ENCODE measurements at regions of chr17 and their contacts with region 1.

Region 1: GRCh38 chr17:4997302-4998026 is at the starts of genes INCA1 and KIF1C:
- DNase-seq: peak; percentile 90 to 96
- H3K4me3 ChIP-seq: peak within 1 kb of the TSS; percentile 85 to 100
- H3K27ac ChIP-seq: peak within 1 kb of the TSS; percentile 94 to 97
- H3K4me1 ChIP-seq: peaks cover 0 to 37% (median 31%) of the 10 kb centered on the region in 4 donors
- H3K27me3 ChIP-seq: no peaks in the 10 kb centered on the region
- CTCF ChIP-seq: peak; percentile 24 to 43

Region 2: DNA sequence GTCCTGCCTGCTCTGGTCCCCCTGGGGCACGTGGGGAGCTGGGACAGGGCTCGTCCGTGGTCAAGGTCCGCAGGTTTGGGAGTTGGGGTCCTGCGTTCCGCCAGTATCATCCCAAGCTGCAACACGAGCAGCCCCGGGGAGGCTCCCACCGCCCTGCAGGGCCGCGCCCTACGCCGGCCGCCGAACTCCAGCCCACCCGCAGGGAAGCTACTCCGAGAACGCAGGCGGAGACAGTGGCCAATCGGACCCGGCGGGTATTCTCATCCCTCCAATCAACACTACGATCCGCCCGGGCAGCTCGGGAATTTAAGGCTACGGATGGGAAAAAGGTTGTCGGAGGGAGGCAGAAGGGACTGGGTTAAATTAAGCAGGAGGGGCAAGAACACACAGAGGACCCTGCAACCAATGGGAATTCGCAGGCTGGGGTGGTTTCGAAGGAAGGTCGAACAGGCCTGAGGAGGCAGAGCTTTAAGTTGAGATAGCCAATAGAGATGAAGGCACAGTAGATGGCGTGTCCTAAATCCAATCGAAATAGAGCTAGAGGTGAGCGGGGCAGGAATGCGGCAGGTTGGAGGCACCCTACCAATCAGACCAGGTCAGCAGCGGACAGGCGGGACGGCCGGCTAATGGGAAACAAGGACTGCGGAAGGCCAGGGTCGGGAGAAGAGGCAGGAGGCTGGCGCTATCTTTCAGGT is 30.5 kb before region 1 on chr17:
- intact Hi-C with region 1: loop called (anchors 1 kb)
- DNase-seq: peak; percentile 99
- H3K4me3 ChIP-seq: peak overlapping the region; percentile 66 to 75
- H3K27ac ChIP-seq: peak overlapping the region; percentile 90 to 92
- H3K4me1 ChIP-seq: peaks cover 0 to 34% (median 32%) of the 10 kb centered on the region in 4 donors
- H3K27me3 ChIP-seq: no peaks in the 10 kb centered on the region
- CTCF ChIP-seq: no peak

Region 3: DNA sequence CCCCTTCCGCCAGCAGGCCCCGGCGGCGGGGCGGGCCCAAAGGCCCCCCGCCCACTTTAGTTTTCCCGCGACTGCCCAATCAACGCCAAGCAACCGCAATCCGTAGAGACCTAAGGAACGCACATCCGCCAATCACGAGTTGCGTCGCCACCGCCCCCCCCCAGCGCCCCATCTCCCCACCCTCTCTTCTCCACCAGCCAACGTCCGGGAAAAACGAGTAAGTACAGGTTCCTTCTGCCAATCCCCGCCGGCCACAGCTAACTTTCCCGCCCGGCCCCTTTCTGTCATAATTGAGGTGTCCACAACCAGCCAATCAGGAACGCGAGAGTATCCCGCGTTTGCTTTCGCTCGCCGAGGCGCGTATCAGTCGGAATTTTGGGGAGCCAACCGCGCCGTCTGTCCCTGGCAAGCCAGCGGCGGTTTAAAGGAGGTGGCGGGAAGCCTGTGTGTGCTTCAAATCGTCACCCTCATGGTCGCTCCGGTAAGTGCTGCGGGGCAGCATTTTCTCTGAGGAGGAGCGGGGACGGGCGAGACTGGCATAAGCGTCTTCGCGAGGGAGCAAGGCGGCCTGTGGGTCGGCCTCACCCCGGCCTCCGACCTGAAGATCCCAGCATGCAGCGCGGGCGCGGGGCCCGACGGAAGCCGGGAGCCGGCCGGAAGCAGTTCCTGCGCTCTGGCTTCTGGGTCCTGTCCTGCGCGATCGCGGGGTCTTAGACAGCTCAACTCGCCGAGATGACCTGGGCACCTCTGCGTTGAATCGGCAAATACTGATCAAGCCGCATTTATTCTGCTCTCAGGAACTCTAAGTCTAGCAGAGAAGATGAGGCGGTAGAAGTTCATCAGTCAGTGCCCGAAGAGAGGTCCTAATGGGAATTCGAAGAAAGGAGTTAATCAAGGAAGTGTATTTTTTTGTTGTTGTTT is 489.0 kb after region 1 on chr17 and contains the start of gene MIS12:
- intact Hi-C with region 1: no loop called
- DNase-seq: peak; percentile 99
- H3K4me3 ChIP-seq: peak within 1 kb of the TSS; percentile 78 to 95
- H3K27ac ChIP-seq: peak within 1 kb of the TSS; percentile 95 to 98
- H3K4me1 ChIP-seq: peaks cover 0 to 31% (median 28%) of the 10 kb centered on the region in 4 donors
- H3K27me3 ChIP-seq: no peaks in the 10 kb centered on the region
- CTCF ChIP-seq: no peak